ENCODE measurements at regions of chr11 and their contacts with region 1.

Region 1: GRCh38 chr11:72814286-72815109 is at the start of gene ATG16L2:
- DNase-seq: peak; percentile 76
- ATAC-seq: peak; percentile 92
- H3K4me3 ChIP-seq: peak within 1 kb of the TSS; percentile 89
- H3K27ac ChIP-seq: peak within 1 kb of the TSS; percentile 99
- H3K4me1 ChIP-seq: peaks cover 22% of the 10 kb centered on the region
- H3K27me3 ChIP-seq: no peaks in the 10 kb centered on the region
- CTCF ChIP-seq: peak; percentile 34
- POLR2A ChIP-seq: peak; percentile 48
- RAD21 ChIP-seq: no peak; the same call in 1 of the 2 replicates
- total RNA-seq, gene ATG16L2: 1.3 and 1.4 TPM in 2 replicates

Region 2: DNA sequence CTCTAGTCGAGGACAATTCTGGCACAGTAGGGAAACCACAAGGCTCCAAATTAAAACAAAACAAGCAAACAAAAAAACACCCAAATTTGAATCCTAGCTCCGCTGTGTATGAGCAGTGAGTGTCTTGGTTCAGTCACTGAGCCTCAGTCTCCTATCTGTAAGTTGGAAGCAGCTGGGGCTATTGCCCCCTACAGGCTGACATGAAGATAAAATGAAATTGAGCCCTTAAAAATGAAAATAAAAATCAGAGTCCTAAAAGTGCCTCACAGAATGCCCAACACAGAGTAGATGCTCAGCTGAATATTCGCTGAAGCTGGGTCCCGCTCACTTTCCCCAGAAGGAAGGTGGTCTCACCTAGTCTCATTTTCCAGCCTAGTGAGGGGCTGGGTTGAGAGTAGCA is 205.5 kb before region 1 on chr11:
- CTCF ChIA-PET with region 1: no interaction called
- POLR2A ChIA-PET with region 1: no interaction called
- dilution Hi-C with region 1: no loop called
- in situ Hi-C with region 1: no loop called
- intact Hi-C with region 1: no loop called
- DNase-seq: peak; percentile 30
- ATAC-seq: peak; percentile 76
- H3K4me3 ChIP-seq: no peak overlapping the region
- H3K27ac ChIP-seq: no peak overlapping the region
- H3K4me1 ChIP-seq: no peaks in the 10 kb centered on the region
- H3K27me3 ChIP-seq: peaks cover 89% of the 10 kb centered on the region
- CTCF ChIP-seq: peak; percentile 57
- POLR2A ChIP-seq: no peak
- RAD21 ChIP-seq: peak; percentile 19; the same call in 1 of the 2 replicates

Region 3: GRCh38 chr11:72752088-72752914 is 62.2 kb before region 1 on chr11 and contains the start of gene ARAP1:
- CTCF ChIA-PET with region 1: no interaction called
- POLR2A ChIA-PET with region 1: no interaction called
- dilution Hi-C with region 1: no loop called
- in situ Hi-C with region 1: no loop called
- intact Hi-C with region 1: loop called (anchors 5 kb)
- DNase-seq: peak; percentile 59
- ATAC-seq: peak; percentile 93
- H3K4me3 ChIP-seq: peak within 1 kb of the TSS; percentile 95
- H3K27ac ChIP-seq: peak within 1 kb of the TSS; percentile 73
- H3K4me1 ChIP-seq: peaks cover 7% of the 10 kb centered on the region
- H3K27me3 ChIP-seq: no peaks in the 10 kb centered on the region
- CTCF ChIP-seq: 0 out of 2 replicates have a peak, but pooled peaks have one; percentile 14
- POLR2A ChIP-seq: peak; percentile 74
- RAD21 ChIP-seq: no peak; the same call in 1 of the 2 replicates
- total RNA-seq, gene ARAP1: 37.6 and 38.0 TPM in 2 replicates

Measured in IMR-90 (cell line).